Activated CD8-positive, alpha-beta memory T cell treated with anti-CD3 and anti-CD28 coated beads, Interleukin-2, amount 10 ng/mL, durations not matched to agents 7 days and 5 days (primary cell): ENCODE measurements at regions of chr17 and their contacts with region 1.

Region 1: DNA sequence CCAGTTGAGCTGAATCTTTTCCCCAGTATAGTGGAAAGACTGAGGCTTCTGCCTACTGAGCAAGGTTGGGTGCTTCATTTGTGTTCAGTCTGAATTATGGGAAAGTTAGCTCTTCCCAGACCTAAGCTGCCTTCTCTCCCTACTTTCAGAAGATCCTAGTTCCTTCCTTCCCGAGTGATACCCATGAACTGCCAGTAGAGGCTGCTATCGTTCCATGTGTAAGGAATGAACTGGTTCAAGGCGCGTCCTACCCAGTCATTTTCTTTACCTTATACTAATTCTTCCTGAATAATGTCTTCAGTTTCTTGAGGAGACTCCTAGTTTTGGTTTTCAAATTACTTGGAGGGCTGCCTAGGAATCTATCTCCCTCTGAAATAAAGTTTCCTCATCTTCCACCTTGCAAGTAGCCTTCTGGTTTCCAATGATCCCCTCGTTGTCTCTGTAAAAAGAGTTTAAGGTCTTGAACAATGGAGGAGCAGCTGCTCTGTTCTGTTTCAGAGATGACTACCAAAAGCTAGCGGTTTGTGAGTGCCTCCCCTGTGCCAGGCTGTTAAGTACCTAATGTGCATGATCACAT is 934 bp upstream of the AOC2 start:
- DNase-seq: no peak
- ATAC-seq: no peak
- H3K4me3 Mint-ChIP-seq: no peak overlapping the region
- H3K27ac Mint-ChIP-seq: no peak overlapping the region
- H3K4me1 Mint-ChIP-seq: peaks cover 14% of the 10 kb centered on the region
- H3K27me3 Mint-ChIP-seq: no peaks in the 10 kb centered on the region

Region 2: GRCh38 chr17:42832974-42833766 is 10.3 kb before region 1 on chr17 and contains the start of gene PSME3:
- CTCF ChIA-PET with region 1: interaction called, 11 read pairs
- DNase-seq: peak; percentile 94
- ATAC-seq: peak; percentile 94
- H3K4me3 Mint-ChIP-seq: peak within 1 kb of the TSS; percentile 91
- H3K27ac Mint-ChIP-seq: peak within 1 kb of the TSS; percentile 97
- H3K4me1 Mint-ChIP-seq: peaks cover 28% of the 10 kb centered on the region
- H3K27me3 Mint-ChIP-seq: peaks cover 3% of the 10 kb centered on the region
- total RNA-seq, gene PSME3: 123 to 166 TPM

Region 3: DNA sequence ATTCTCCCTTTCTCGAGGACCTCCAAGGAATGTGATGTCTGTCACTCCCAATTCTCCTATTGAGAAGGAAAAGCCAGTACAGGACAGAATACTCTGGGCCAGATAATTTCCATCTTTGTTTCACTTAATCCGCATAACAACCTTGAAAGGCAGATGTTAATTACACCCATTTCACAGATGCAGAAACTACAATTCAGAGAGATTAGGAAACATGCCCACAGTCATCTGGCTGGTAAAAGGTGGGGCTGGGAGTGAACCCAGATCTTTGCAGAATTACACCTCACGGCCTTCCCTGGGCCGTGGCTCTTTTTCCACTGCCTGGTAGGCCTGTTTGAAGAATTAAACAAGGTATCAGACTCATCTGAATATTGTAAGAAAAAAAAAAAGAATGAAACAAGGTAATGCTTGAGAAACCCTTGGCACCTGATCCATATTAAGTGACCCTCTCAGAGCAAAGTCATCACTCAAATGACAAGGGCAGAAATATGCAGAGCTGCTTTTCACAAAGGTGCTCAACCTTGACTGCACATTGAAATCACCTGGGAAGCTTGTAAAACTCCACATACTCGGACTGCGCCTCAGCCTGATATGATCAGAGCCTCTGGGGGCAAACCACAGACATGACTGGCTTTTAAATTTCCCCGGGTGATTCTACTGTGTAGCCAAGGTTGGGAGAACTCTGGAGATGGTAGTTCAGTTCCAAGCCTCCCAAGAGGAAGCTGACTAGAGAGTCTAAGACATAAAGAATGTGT is 40.5 kb after region 1 on chr17:
- CTCF ChIA-PET with region 1: no interaction called
- DNase-seq: no peak
- ATAC-seq: no peak
- H3K4me3 Mint-ChIP-seq: no peak overlapping the region
- H3K27ac Mint-ChIP-seq: no peak overlapping the region
- H3K4me1 Mint-ChIP-seq: no peaks in the 10 kb centered on the region
- H3K27me3 Mint-ChIP-seq: peaks cover 7% of the 10 kb centered on the region

Region 4: GRCh38 chr17:42895185-42895555 is 51.7 kb after region 1 on chr17:
- CTCF ChIA-PET with region 1: no interaction called
- DNase-seq: no peak
- ATAC-seq: no peak
- H3K4me3 Mint-ChIP-seq: no peak overlapping the region
- H3K27ac Mint-ChIP-seq: no peak overlapping the region
- H3K4me1 Mint-ChIP-seq: no peaks in the 10 kb centered on the region
- H3K27me3 Mint-ChIP-seq: peaks cover 26% of the 10 kb centered on the region

Region 5: GRCh38 chr17:43085474-43085873 is 242.0 kb after region 1 on chr17:
- CTCF ChIA-PET with region 1: no interaction called
- DNase-seq: no peak
- ATAC-seq: no peak
- H3K4me3 Mint-ChIP-seq: no peak overlapping the region
- H3K27ac Mint-ChIP-seq: no peak overlapping the region
- H3K4me1 Mint-ChIP-seq: no peaks in the 10 kb centered on the region
- H3K27me3 Mint-ChIP-seq: no peaks in the 10 kb centered on the region